ENCODE measurements at regions of chr3 and their contacts with region 1.

Region 1: GRCh38 chr3:65963787-65964677 is 74.7 kb downstream of the MAGI1 start:
- DNase-seq: no peak
- H3K4me3 Mint-ChIP-seq: peak overlapping the region; percentile 32
- H3K27ac Mint-ChIP-seq: peak overlapping the region; percentile 96
- H3K4me1 Mint-ChIP-seq: peaks cover 33% of the 10 kb centered on the region
- H3K27me3 Mint-ChIP-seq: no peaks in the 10 kb centered on the region

Region 2: DNA sequence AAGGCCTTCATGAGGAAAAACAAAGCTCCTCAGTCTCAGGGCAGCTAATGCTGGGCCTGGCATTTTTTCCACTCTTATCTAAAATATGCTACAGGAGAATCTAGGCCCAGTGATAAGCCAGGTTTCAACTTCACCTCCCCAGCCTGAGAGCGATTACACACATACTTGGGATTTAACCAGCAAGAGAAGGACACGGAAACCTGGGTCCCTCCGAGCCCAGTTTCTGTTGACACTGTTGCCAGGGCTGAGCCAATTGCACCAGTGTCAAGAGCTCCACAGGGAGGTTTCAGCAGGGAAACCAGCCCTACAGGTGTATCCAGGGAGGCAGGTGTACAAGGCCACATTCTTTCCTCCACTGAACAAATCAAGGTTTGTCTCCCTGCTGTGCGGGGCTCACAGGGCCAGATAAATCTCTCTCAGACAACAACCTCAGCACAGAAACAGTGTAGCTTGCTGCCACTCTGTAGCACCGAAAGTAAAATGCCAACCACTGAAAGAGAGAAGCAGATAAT is 10.7 kb before region 1 on chr3:
- intact Hi-C with region 1: no loop called
- DNase-seq: no peak
- H3K4me3 Mint-ChIP-seq: no peak overlapping the region
- H3K27ac Mint-ChIP-seq: no peak overlapping the region
- H3K4me1 Mint-ChIP-seq: peaks cover 6% of the 10 kb centered on the region
- H3K27me3 Mint-ChIP-seq: peaks cover 2% of the 10 kb centered on the region

Region 3: GRCh38 chr3:65992106-65992505 is 28.1 kb after region 1 on chr3:
- intact Hi-C with region 1: loop called (anchors 1 kb)
- DNase-seq: no peak
- H3K4me3 Mint-ChIP-seq: no peak overlapping the region
- H3K27ac Mint-ChIP-seq: peak overlapping the region; percentile 78
- H3K4me1 Mint-ChIP-seq: peaks cover 17% of the 10 kb centered on the region
- H3K27me3 Mint-ChIP-seq: no peaks in the 10 kb centered on the region

Region 4: GRCh38 chr3:66033241-66034138 is 69.5 kb after region 1 on chr3:
- intact Hi-C with region 1: loop called (anchors 1 kb)
- DNase-seq: no peak
- H3K4me3 Mint-ChIP-seq: no peak overlapping the region
- H3K27ac Mint-ChIP-seq: peak overlapping the region; percentile 80
- H3K4me1 Mint-ChIP-seq: peaks cover 15% of the 10 kb centered on the region
- H3K27me3 Mint-ChIP-seq: peaks cover 24% of the 10 kb centered on the region

Region 5: DNA sequence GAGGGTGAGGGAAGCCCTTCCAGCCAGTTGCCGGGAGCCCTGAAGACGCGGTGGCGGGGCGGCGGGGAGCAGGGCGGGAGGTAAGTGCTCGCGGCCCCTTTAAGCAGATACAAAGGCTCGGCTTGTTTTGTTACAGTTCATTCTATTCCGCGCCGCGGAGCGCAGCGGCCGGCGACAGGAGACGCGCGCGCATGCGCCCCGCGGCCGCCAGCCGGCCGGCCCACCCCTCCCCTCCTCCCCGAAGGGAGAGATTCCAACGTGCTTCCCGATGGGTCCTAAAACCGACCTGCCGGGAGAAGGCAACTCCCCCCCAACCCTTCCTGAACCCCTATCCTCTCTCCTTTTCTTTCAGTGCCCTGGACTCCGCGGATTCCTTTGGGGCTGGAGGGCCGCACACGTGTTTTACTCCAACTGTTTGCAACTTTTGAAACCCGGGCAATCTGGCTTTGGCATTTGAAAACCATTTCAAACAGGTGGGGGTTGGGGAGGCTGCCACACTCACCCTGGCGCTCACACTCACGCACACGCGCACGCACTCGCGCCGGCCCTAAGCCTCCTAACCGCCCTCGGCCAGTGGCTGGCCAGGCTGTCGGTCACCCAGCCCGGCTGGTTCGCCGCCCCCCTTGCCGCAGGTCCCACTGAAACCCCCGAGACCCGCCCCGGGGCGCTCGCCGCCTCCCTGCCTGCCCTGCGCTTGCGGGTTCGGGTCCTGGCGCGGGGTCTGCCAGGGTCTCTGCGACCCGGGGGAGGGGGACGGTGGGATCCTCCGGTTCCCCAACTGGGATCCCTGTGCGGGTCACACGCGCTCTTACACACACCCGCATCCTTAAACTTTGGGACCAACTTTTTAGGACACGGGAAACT is 74.9 kb after region 1 on chr3 and contains the start of gene MAGI1:
- intact Hi-C with region 1: loop called (anchors 1 kb)
- DNase-seq: peak; percentile 46
- H3K4me3 Mint-ChIP-seq: peak within 1 kb of the TSS; percentile 92
- H3K27ac Mint-ChIP-seq: peak within 1 kb of the TSS; percentile 89
- H3K4me1 Mint-ChIP-seq: peaks cover 10% of the 10 kb centered on the region
- H3K27me3 Mint-ChIP-seq: peaks cover 59% of the 10 kb centered on the region
- total RNA-seq, gene MAGI1: 10.8 and 11.0 TPM in 2 replicates

Measured in activated T-helper 2 cell treated with anti-CD3 and anti-CD28 coated beads, Interferon-gamma antibody, Interleukin-2, Interleukin-4, amounts not matched to agents 10 μg/mL and 5 μg/mL and 100 μg/mL, durations not matched to agents 14 hours and 24 hours and 36 hours (primary cell).